ENCODE measurements at regions of chr2 and their contacts with region 1.

Region 1: DNA sequence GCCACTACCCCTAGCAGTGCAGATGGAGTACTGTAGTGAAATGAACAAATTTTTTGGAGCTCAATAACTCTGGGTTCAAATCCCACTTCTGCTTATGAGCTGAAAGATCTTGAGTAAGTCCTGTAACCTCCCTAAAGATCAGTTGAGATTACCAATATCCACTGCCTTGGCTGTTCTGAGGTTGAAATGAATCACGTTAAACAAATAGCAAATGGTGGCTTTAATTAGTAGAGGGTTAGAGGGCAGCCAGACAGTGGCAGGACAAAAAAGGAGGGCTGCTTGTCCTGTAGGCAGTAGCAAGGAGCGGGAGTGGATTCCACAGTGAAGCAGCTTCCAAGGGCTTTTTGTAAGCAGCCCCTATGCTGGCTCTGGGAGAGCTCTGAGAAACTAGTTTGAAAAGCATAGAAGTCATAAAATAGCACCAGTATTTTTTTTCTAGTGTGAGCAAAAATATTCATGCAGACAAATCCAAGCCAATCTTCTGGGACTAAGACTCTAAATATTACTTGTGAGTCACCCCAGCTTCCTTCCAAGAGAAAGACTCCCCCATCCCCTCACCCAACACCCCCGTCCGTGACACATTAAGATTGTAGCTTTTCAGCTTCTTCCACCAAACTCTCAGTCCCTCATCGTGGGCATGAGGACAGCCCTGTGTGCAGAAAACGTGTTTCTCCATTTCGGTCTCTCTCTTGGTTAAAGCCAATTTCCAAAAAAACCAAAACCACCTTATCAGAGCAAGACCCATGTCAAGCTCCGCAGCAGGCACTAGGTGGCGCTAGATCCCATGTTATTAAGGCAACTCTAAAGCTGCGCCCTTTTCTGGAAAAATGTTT is 123.5 kb upstream of the LGALSL start:
- DNase-seq: peak; percentile 85
- ATAC-seq: no peak
- H3K4me3 Mint-ChIP-seq: peak overlapping the region; percentile 15
- H3K27ac Mint-ChIP-seq: peak overlapping the region; percentile 55
- H3K4me1 Mint-ChIP-seq: peaks cover 58% of the 10 kb centered on the region
- H3K27me3 Mint-ChIP-seq: peaks cover 8% of the 10 kb centered on the region

Region 2: GRCh38 chr2:64019719-64020528 is 310.6 kb before region 1 on chr2:
- CTCF ChIA-PET with region 1: interaction called, 30 read pairs
- POLR2A ChIA-PET with region 1: no interaction called
- DNase-seq: no peak
- ATAC-seq: peak; percentile 7
- H3K4me3 Mint-ChIP-seq: peak overlapping the region; percentile 77
- H3K27ac Mint-ChIP-seq: peak overlapping the region; percentile 93
- H3K4me1 Mint-ChIP-seq: peaks cover 39% of the 10 kb centered on the region
- H3K27me3 Mint-ChIP-seq: no peaks in the 10 kb centered on the region

Region 3: GRCh38 chr2:64133828-64134227 is 196.7 kb before region 1 on chr2:
- CTCF ChIA-PET with region 1: interaction called, 11 read pairs
- POLR2A ChIA-PET with region 1: interaction called, 3 read pairs
- DNase-seq: no peak
- ATAC-seq: no peak
- H3K4me3 Mint-ChIP-seq: no peak overlapping the region
- H3K27ac Mint-ChIP-seq: no peak overlapping the region
- H3K4me1 Mint-ChIP-seq: peaks cover 55% of the 10 kb centered on the region
- H3K27me3 Mint-ChIP-seq: no peaks in the 10 kb centered on the region

Region 4: DNA sequence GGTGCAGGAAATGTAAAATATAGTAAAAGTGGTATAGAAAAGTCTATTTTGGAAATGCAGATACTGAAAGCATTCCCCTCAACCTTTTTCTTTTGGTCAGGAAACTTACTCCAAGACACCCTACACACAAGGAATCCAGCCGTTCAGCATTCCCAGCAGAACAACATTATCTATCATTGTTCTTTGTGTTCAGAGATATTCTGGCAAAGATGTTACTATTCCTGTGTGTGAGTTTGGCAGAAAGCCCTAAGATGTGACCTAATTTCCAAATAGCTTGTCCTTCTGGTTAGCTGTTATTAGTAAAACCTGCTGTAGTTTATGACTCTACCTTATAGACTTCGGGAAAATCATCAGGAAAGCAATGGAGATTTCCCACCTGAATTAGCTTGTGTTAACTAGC is 108.1 kb before region 1 on chr2:
- CTCF ChIA-PET with region 1: interaction called, 18 read pairs
- POLR2A ChIA-PET with region 1: interaction called, 4 read pairs
- DNase-seq: no peak
- ATAC-seq: no peak
- H3K4me3 Mint-ChIP-seq: no peak overlapping the region
- H3K27ac Mint-ChIP-seq: no peak overlapping the region
- H3K4me1 Mint-ChIP-seq: peaks cover 13% of the 10 kb centered on the region
- H3K27me3 Mint-ChIP-seq: no peaks in the 10 kb centered on the region

Region 5: GRCh38 chr2:64380853-64381527 is 50.5 kb after region 1 on chr2:
- CTCF ChIA-PET with region 1: no interaction called
- POLR2A ChIA-PET with region 1: no interaction called
- DNase-seq: no peak
- ATAC-seq: no peak
- H3K4me3 Mint-ChIP-seq: no peak overlapping the region
- H3K27ac Mint-ChIP-seq: no peak overlapping the region
- H3K4me1 Mint-ChIP-seq: no peaks in the 10 kb centered on the region
- H3K27me3 Mint-ChIP-seq: peaks cover 7% of the 10 kb centered on the region

Region 6: GRCh38 chr2:64410671-64411070 is 80.2 kb after region 1 on chr2:
- CTCF ChIA-PET with region 1: interaction called, 12 read pairs
- POLR2A ChIA-PET with region 1: no interaction called
- DNase-seq: peak; percentile 17
- ATAC-seq: peak; percentile 36
- H3K4me3 Mint-ChIP-seq: no peak overlapping the region
- H3K27ac Mint-ChIP-seq: no peak overlapping the region
- H3K4me1 Mint-ChIP-seq: no peaks in the 10 kb centered on the region
- H3K27me3 Mint-ChIP-seq: peaks cover 7% of the 10 kb centered on the region

Region 7: DNA sequence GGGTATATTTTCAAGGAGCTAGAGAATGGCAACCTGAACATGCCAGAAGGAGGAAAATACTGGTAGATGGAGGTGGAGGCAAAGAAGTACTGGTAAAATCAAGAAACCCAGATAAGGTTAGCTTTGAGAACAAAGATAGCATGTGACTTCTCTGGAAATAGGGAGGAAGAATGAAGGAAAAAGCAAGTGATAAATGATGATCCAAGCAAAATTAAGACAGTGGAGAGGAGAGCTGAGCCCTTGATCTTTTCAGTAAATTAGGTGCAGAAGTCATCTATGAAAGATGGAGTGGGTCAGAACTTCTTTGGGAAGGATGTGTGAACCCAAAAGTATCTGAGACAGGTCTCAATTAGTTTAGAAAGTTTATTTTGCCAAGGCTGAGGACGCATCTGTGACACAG is 167.9 kb after region 1 on chr2:
- CTCF ChIA-PET with region 1: interaction called, 12 read pairs
- POLR2A ChIA-PET with region 1: no interaction called
- DNase-seq: no peak
- ATAC-seq: no peak
- H3K4me3 Mint-ChIP-seq: no peak overlapping the region
- H3K27ac Mint-ChIP-seq: no peak overlapping the region
- H3K4me1 Mint-ChIP-seq: peaks cover 8% of the 10 kb centered on the region
- H3K27me3 Mint-ChIP-seq: peaks cover 29% of the 10 kb centered on the region

Region 8: GRCh38 chr2:64609227-64609941 is 278.9 kb after region 1 on chr2:
- CTCF ChIA-PET with region 1: interaction called, 12 read pairs
- POLR2A ChIA-PET with region 1: no interaction called
- DNase-seq: peak; percentile 71
- ATAC-seq: peak; percentile 77
- H3K4me3 Mint-ChIP-seq: peak overlapping the region; percentile 61
- H3K27ac Mint-ChIP-seq: peak overlapping the region; percentile 67
- H3K4me1 Mint-ChIP-seq: peaks cover 25% of the 10 kb centered on the region
- H3K27me3 Mint-ChIP-seq: peaks cover 19% of the 10 kb centered on the region